ENCODE measurements at regions of chr19 and their contacts with region 1.

Region 1: GRCh38 chr19:3125900-3126524 is 9.8 kb upstream of the GNA15 start:
- DNase-seq: peak; percentile 69
- H3K4me3 Mint-ChIP-seq: no peak overlapping the region
- H3K27ac Mint-ChIP-seq: no peak overlapping the region
- H3K4me1 Mint-ChIP-seq: peaks cover 7% of the 10 kb centered on the region
- H3K27me3 Mint-ChIP-seq: no peaks in the 10 kb centered on the region

Region 2: GRCh38 chr19:2962045-2962561 is 163.9 kb before region 1 on chr19:
- CTCF ChIA-PET with region 1: interaction called, 16 read pairs
- POLR2A ChIA-PET with region 1: no interaction called
- intact Hi-C with region 1: no loop called
- DNase-seq: peak; percentile 46
- H3K4me3 Mint-ChIP-seq: peak overlapping the region; percentile 31
- H3K27ac Mint-ChIP-seq: peak overlapping the region; percentile 24
- H3K4me1 Mint-ChIP-seq: peaks cover 2% of the 10 kb centered on the region
- H3K27me3 Mint-ChIP-seq: no peaks in the 10 kb centered on the region

Region 3: GRCh38 chr19:3075895-3076431 is 50.0 kb before region 1 on chr19:
- CTCF ChIA-PET with region 1: interaction called, 19 read pairs
- POLR2A ChIA-PET with region 1: no interaction called
- intact Hi-C with region 1: no loop called
- DNase-seq: peak; percentile 85
- H3K4me3 Mint-ChIP-seq: no peak overlapping the region
- H3K27ac Mint-ChIP-seq: no peak overlapping the region
- H3K4me1 Mint-ChIP-seq: peaks cover 4% of the 10 kb centered on the region
- H3K27me3 Mint-ChIP-seq: no peaks in the 10 kb centered on the region

Region 4: DNA sequence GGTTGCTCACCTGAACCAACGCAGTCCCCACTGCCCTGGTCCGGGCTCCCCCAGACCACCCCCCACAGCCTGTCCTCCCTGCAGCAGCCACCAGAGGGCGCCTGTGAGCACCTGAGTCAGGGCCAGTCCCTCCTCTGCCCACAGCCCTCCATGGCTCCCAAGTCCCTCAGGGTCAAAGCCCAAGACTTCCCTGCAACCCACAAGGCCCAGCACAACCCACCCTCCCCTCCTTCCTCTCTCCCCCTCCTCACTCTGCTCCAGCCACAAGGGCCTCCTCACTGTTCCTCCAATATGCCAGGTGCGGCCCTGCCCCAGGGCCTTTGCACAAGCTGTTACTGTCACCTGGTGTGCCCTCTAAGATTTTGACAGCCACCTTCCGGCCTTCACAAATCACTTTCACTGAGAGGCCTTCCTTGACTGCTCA is 20.7 kb after region 1 on chr19:
- CTCF ChIA-PET with region 1: interaction called, 59 read pairs
- POLR2A ChIA-PET with region 1: no interaction called
- intact Hi-C with region 1: no loop called
- DNase-seq: peak; percentile 79
- H3K4me3 Mint-ChIP-seq: no peak overlapping the region
- H3K27ac Mint-ChIP-seq: no peak overlapping the region
- H3K4me1 Mint-ChIP-seq: peaks cover 24% of the 10 kb centered on the region
- H3K27me3 Mint-ChIP-seq: no peaks in the 10 kb centered on the region

Region 5: DNA sequence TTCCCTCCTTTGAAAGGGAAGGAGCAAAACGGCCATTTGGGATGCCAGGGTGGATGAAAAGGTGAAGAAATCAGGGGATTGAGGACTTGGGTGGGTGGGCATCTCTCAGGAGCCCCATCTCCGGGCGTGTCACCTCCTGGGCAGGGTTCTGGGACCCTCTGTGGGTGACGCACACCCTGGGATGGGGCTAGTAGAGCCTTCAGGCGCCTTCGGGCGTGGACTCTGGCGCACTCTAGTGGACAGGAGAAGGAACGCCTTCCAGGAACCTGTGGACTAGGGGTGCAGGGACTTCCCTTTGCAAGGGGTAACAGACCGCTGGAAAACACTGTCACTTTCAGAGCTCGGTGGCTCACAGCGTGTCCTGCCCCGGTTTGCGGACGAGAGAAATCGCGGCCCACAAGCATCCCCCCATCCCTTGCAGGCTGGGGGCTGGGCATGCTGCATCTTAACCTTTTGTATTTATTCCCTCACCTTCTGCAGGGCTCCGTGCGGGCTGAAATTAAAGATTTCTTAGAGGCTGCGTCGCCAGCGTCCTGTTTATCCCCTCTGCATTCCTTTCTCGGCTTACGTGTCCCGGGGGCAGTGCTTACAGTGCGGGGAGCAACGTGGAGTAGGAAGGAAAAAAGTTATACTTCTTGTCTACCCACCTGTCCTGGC is 37.3 kb after region 1 on chr19:
- CTCF ChIA-PET with region 1: interaction called, 37 read pairs
- POLR2A ChIA-PET with region 1: no interaction called
- intact Hi-C with region 1: loop called (anchors 1 kb)
- DNase-seq: peak; percentile 78
- H3K4me3 Mint-ChIP-seq: no peak overlapping the region
- H3K27ac Mint-ChIP-seq: peak overlapping the region; percentile 20
- H3K4me1 Mint-ChIP-seq: peaks cover 20% of the 10 kb centered on the region
- H3K27me3 Mint-ChIP-seq: no peaks in the 10 kb centered on the region